ENCODE measurements at regions of chr7 and their contacts with region 1.

Region 1: DNA sequence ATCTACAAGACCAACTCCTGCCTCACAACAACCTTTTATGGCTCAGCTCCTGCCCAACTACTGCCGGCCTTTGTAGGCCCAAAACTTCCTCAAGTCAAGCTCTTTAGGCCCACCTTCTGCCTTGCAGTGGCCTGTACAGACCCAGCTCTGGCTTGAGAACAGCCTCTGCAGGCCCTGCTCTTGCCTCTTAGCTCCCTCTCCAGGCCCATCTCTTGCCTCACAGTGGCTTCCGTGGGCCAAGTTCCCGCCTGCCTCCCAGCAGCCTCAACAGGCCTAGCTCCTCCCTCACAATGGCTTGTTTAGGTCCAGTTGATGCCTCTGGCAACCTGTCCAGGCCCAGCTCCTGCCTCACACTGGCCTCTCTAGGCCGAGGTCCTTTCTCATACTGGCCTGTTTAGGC is 32.4 kb upstream of the VKORC1L1 start:
- DNase-seq: no peak
- H3K4me3 ChIP-seq: no peak overlapping the region
- H3K4me3 Mint-ChIP-seq: no peak overlapping the region
- H3K27ac ChIP-seq: no peak overlapping the region
- H3K27ac Mint-ChIP-seq: peak overlapping the region in 2 of 7 donors; percentile 37 to 64
- H3K4me1 ChIP-seq: no peaks in the 10 kb centered on the region
- H3K4me1 Mint-ChIP-seq: peaks cover 2 to 11% (median 2%) of the 10 kb centered on the region in 4 donors
- H3K27me3 ChIP-seq: no peaks in the 10 kb centered on the region
- H3K27me3 Mint-ChIP-seq: no peaks in the 10 kb centered on the region

Region 2: GRCh38 chr7:65722345-65722792 is 118.1 kb before region 1 on chr7:
- CTCF ChIA-PET with region 1: no interaction called
- POLR2A ChIA-PET with region 1: no interaction called
- intact Hi-C with region 1: loop called (anchors 1 kb)
- DNase-seq: peak; percentile 67 to 71 (median 69)
- H3K4me3 ChIP-seq: no peak overlapping the region
- H3K4me3 Mint-ChIP-seq: no peak overlapping the region
- H3K27ac ChIP-seq: no peak overlapping the region
- H3K27ac Mint-ChIP-seq: peak overlapping the region in 5 of 7 donors; percentile 24 to 78 (median 64)
- H3K4me1 ChIP-seq: no peaks in the 10 kb centered on the region
- H3K4me1 Mint-ChIP-seq: peaks cover 0 to 4% (median under 1%) of the 10 kb centered on the region in 4 donors
- H3K27me3 ChIP-seq: no peaks in the 10 kb centered on the region
- H3K27me3 Mint-ChIP-seq: no peaks in the 10 kb centered on the region